AG04449 (cell line): ENCODE measurements at regions of chr4 and their contacts with region 1.

Region 1: DNA sequence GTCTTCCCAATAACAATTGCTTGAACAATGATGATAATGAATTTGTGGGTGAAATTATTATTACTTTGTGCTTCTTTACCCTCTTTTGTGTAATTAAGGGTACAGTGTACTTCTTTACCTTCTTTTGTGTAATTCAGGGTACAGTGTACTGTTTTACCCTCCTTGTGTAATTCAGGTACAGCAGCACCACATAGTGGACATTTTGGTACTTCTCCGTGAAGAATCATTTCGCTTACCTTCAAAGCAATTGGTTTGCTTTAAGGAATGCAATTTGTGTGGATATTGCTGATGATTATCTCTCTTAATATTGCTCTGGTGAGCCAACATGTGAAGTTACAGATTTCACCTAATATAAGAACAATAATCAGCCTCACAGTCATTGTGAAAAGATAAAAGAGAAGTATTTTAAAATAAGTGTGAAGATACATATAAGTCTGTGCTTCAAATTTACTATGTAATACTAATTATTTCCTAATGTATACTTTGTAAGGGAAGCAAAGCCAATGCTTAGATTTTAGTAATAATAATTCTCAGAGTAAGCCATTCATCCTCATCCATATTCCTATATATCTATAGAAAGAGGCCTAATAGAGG is 27.2 kb upstream of the SEC24B start:
- DNase-seq: peak; percentile 23
- H3K4me3 ChIP-seq: no peak overlapping the region
- CTCF ChIP-seq: peak; percentile 53

Region 2: GRCh38 chr4:108683479-108683878 is 723.0 kb before region 1 on chr4:
- CTCF ChIA-PET with region 1: interaction called, 41 read pairs
- POLR2A ChIA-PET with region 1: no interaction called
- DNase-seq: no peak
- H3K4me3 ChIP-seq: no peak overlapping the region
- CTCF ChIP-seq: no peak

Region 3: DNA sequence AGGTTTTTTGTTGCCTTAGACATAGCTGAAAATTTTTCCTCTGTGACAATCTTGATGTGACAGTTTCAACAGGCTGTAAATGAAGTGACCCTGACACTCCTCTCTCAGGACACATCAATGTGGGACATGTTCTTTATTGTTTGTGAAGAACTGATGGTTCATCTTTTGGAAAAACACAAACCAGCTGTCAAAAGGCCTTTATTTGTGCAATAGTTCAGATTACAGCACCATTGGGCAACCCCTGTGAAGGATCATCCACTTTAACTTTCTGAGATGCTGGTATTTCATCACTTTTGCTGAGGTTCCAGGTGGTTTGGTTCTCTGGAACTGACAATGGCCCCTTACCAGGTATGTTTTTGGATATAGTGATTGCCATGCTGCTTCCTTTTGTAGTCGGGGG is 715.7 kb before region 1 on chr4:
- CTCF ChIA-PET with region 1: interaction called, 11 read pairs
- POLR2A ChIA-PET with region 1: no interaction called
- DNase-seq: no peak
- H3K4me3 ChIP-seq: no peak overlapping the region
- CTCF ChIP-seq: no peak

Region 4: DNA sequence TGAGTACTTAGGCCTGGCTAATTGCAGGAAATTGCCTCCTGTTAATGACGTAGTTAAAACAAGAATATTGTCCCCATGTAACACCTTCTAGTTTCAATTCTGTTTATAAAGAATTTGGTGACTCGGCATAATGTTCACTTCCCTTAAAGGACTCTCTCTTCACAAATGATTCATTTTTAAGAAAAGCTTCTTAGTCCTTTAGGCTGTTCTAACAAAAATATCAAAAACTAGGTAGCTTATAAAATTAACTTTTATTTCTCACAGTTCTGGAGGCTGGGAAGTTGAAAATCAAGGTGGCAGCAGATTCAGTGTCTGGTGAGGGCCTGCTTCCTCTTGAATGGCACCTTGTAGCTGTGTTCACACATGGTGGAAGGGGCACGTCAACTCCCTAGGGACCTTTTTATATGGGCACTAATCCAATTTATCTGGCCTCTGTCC is 127.8 kb before region 1 on chr4:
- CTCF ChIA-PET with region 1: no interaction called
- POLR2A ChIA-PET with region 1: no interaction called
- DNase-seq: no peak
- H3K4me3 ChIP-seq: no peak overlapping the region
- CTCF ChIP-seq: no peak